ENCODE measurements at regions of chr6 and their contacts with region 1.

Region 1: GRCh38 chr6:84227434-84228197 is at the start of gene CEP162:
- DNase-seq: no peak
- H3K4me3 ChIP-seq: peak within 1 kb of the TSS; percentile 95
- CTCF ChIP-seq: peak; percentile 47

Region 2: GRCh38 chr6:83615025-83615999 is 612.3 kb before region 1 on chr6:
- CTCF ChIA-PET with region 1: interaction called, 49 read pairs
- POLR2A ChIA-PET with region 1: no interaction called
- DNase-seq: peak; percentile 12
- H3K4me3 ChIP-seq: no peak overlapping the region
- CTCF ChIP-seq: peak; percentile 37

Region 3: DNA sequence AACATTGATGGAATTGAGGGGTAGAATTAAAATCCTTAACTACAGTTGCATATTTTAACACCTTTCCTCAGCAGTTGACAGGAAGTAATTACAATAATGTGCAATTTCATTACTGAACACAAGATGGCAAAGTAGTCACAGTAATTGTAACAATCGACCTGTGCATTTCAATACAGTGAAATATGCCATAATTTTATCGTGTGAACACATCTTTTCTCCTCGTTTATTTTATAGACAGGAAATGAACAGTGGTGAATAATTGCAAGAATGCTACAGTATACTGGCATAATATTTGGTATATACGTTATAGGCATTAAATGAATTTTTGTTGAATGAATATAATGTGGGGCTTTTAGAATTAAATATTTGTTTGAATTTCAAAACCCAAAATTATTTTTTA is 343.1 kb before region 1 on chr6:
- CTCF ChIA-PET with region 1: interaction called, 121 read pairs
- POLR2A ChIA-PET with region 1: no interaction called
- DNase-seq: no peak
- H3K4me3 ChIP-seq: no peak overlapping the region
- CTCF ChIP-seq: peak; percentile 41

Region 4: DNA sequence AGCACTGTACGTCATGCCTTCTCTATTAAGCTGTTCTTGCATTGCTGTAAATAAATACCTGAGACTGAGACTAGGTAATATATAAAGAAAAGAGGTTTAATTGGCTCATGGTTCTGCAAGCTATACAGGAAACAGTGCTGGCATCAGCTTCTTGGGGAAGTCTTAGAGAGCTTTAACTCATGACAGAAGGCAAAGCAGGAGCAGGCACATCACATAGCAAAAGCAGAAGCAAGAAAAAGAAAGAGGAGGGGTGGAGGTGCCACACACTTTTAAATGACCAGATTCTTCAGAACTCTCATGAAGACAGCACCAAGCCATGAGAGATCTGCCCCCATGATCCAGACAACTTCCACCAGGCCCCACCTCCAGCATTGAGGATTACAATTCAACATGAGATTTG is 338.0 kb before region 1 on chr6:
- CTCF ChIA-PET with region 1: interaction called, 121 read pairs
- POLR2A ChIA-PET with region 1: no interaction called
- DNase-seq: no peak
- H3K4me3 ChIP-seq: no peak overlapping the region
- CTCF ChIP-seq: no peak

Region 5: DNA sequence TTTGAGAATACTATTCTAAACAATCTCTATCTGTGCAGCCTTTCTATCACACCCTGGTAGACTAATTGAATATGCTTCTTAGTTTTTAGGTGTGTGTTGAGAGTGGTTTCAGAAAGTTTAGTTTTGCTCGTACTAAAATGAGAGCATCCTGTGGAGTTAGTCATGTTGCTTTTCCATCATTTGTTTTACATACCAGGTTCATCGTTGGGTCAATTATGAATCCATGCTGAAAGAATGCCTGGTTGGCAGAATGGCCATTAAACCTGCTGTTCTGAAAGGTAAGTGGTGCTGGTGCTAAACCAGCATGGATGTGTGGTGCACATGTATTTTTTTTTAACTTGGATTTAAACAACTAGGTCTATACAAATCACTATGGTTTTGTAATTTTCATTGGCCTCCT is 318.8 kb before region 1 on chr6:
- CTCF ChIA-PET with region 1: no interaction called
- POLR2A ChIA-PET with region 1: no interaction called
- DNase-seq: no peak
- H3K4me3 ChIP-seq: no peak overlapping the region
- CTCF ChIP-seq: no peak

Measured in AG04449 (cell line).